Heart left ventricle (tissue), 16 donors: ENCODE measurements at regions of chr1 and their contacts with region 1.

Region 1: GRCh38 chr1:167797015-167797414 is 75.2 kb downstream of the MPZL1 start:
- DNase-seq: peak; percentile 64 to 89 (median 75)
- ATAC-seq: peak; percentile 97 to 100 (median 98)
- H3K4me3 ChIP-seq: no peak overlapping the region
- H3K27ac ChIP-seq: peak overlapping the region; percentile 53 to 86 (median 76)
- H3K4me1 ChIP-seq: peaks cover 0 to 42% (median 25%) of the 10 kb centered on the region in 12 donors
- H3K27me3 ChIP-seq: no peaks in the 10 kb centered on the region
- CTCF ChIP-seq: peak in 1 of 12 donors; percentile 35
- POLR2A ChIP-seq: no peak

Region 2: GRCh38 chr1:167663002-167663772 is 133.8 kb before region 1 on chr1:
- intact Hi-C with region 1: no loop called
- DNase-seq: peak in 3 of 5 donors; percentile 51 to 82 (median 77)
- ATAC-seq: peak; percentile 27 to 79 (median 68)
- H3K4me3 ChIP-seq: no peak overlapping the region
- H3K27ac ChIP-seq: peak overlapping the region in 11 of 12 donors; percentile 35 to 80 (median 67)
- H3K4me1 ChIP-seq: peaks cover 33 to 96% (median 90%) of the 10 kb centered on the region in 12 donors
- H3K27me3 ChIP-seq: no peaks in the 10 kb centered on the region
- CTCF ChIP-seq: peak in 2 of 12 donors; percentile 16 to 21
- POLR2A ChIP-seq: no peak

Region 3: DNA sequence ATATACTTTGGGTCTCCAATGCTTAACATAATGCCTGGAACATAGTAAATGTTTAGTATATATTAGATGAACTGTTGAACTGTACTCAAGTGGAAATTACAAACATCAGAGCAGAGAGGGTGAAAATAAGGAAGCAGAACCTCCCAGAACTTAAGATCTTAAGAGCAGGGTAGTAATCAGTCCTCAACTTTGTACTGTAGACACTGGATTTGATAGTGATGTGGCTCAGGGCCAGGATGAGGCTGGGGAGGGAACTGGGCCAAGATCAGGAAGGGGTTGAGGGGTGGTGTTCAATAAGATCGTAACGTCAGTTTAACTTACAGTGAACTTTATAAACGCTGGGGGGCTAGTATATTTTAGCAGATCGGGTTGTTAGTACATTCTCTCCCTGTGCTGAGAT is 59.8 kb before region 1 on chr1:
- intact Hi-C with region 1: no loop called
- DNase-seq: no peak
- ATAC-seq: peak in 1 of 4 donors; percentile 31
- H3K4me3 ChIP-seq: no peak overlapping the region
- H3K27ac ChIP-seq: no peak overlapping the region
- H3K4me1 ChIP-seq: peaks cover 0 to 40% (median 5%) of the 10 kb centered on the region in 12 donors
- H3K27me3 ChIP-seq: no peaks in the 10 kb centered on the region
- CTCF ChIP-seq: no peak
- POLR2A ChIP-seq: no peak

Region 4: GRCh38 chr1:167763525-167764220 is 33.3 kb before region 1 on chr1:
- intact Hi-C with region 1: loop called in 2 of 10 experiments (anchors 5 kb)
- DNase-seq: no peak
- ATAC-seq: peak in 3 of 4 donors; percentile 44 to 71 (median 45)
- H3K4me3 ChIP-seq: no peak overlapping the region
- H3K27ac ChIP-seq: peak overlapping the region in 1 of 12 donors; percentile 1
- H3K4me1 ChIP-seq: peaks cover 0 to 42% (median 6%) of the 10 kb centered on the region in 12 donors
- H3K27me3 ChIP-seq: no peaks in the 10 kb centered on the region
- CTCF ChIP-seq: no peak
- POLR2A ChIP-seq: no peak